Left ventricle myocardium superior (tissue), 1 donor: ENCODE measurements at regions of chr7 and their contacts with region 1.

Region 1: DNA sequence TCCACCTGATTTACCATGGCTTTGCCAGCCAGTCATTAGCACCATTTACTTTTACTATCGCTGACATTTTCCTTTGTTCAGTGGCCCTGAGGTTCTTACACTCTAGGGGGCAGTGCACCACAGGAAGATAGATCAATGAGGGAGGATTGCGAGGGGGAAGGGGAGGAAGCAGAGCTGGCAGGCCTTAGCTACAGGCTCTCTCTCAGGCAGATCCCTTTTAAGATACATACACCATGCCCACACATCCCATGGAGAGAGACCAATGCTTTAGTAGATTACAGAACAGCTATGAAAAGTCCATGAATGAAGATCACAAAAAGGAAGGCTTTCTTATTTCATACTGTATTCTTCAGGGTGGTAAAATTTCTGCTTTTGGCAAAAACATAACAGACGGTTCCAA is 47.4 kb downstream of the DENND11 start:
- DNase-seq: no peak
- ATAC-seq: peak; percentile 58

Region 2: GRCh38 chr7:141490474-141490873 is 164.1 kb before region 1 on chr7:
- intact Hi-C with region 1: no loop called
- DNase-seq: no peak
- ATAC-seq: no peak

Region 3: DNA sequence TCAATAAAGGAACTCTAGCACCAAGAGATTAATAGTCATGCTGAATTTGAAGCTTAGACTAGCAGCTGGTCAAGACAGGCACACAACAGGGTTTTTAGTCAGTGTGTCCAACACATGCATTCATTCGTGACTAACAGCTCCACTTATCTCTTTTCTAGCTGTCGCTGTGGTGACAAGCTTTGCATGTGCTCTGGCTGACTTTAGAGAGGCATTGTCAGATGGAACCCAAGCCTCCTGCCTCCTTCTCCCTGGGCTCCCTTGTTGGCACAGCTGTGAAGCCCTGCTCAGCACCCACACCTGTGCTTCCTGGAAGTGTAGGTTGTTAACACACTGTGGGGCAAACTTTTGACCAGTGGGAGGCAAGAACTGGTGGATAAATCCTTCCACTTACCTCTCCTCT is 113.2 kb before region 1 on chr7:
- intact Hi-C with region 1: loop called (anchors 10 kb)
- DNase-seq: no peak
- ATAC-seq: peak; percentile 59

Region 4: GRCh38 chr7:141619745-141620144 is 34.8 kb before region 1 on chr7:
- intact Hi-C with region 1: no loop called
- DNase-seq: no peak
- ATAC-seq: no peak

Region 5: GRCh38 chr7:141710301-141710700 is 55.8 kb after region 1 on chr7:
- intact Hi-C with region 1: loop called (anchors 10 kb)
- DNase-seq: no peak
- ATAC-seq: no peak

Region 6: GRCh38 chr7:141785706-141786552 is 131.4 kb after region 1 on chr7:
- intact Hi-C with region 1: loop called (anchors 10 kb)
- DNase-seq: no peak
- ATAC-seq: peak; percentile 41